IMR-90 (cell line): ENCODE measurements at regions of chr5 and their contacts with region 1.

Region 1: GRCh38 chr5:68215208-68215897 is at the start of gene PIK3R1:
- DNase-seq: peak; percentile 91
- ATAC-seq: peak; percentile 93
- H3K4me3 ChIP-seq: peak within 1 kb of the TSS; percentile 83
- H3K27ac ChIP-seq: peak within 1 kb of the TSS; percentile 88
- H3K4me1 ChIP-seq: peaks cover 2% of the 10 kb centered on the region; the same call in 1 of the 2 replicates
- H3K27me3 ChIP-seq: no peaks in the 10 kb centered on the region
- CTCF ChIP-seq: peak; percentile 35; the same call in 1 of the 2 replicates
- POLR2A ChIP-seq: peak; percentile 92
- RAD21 ChIP-seq: no peak
- total RNA-seq, gene PIK3R1: 9.3 and 13.6 TPM in 2 replicates

Region 2: GRCh38 chr5:67971223-67971830 is 244.0 kb before region 1 on chr5:
- CTCF ChIA-PET with region 1: no interaction called
- POLR2A ChIA-PET with region 1: interaction called, 4 read pairs
- dilution Hi-C with region 1: no loop called
- in situ Hi-C with region 1: no loop called
- intact Hi-C with region 1: loop called (anchors 10 kb)
- DNase-seq: peak; percentile 25
- ATAC-seq: no peak
- H3K4me3 ChIP-seq: no peak overlapping the region
- H3K27ac ChIP-seq: no peak overlapping the region
- H3K4me1 ChIP-seq: no peaks in the 10 kb centered on the region
- H3K27me3 ChIP-seq: no peaks in the 10 kb centered on the region
- CTCF ChIP-seq: no peak
- POLR2A ChIP-seq: no peak
- RAD21 ChIP-seq: no peak

Region 3: GRCh38 chr5:68027519-68027918 is 187.8 kb before region 1 on chr5:
- CTCF ChIA-PET with region 1: no interaction called
- POLR2A ChIA-PET with region 1: no interaction called
- dilution Hi-C with region 1: no loop called
- in situ Hi-C with region 1: no loop called
- intact Hi-C with region 1: loop called (anchors 2 kb)
- DNase-seq: peak; percentile 77
- ATAC-seq: peak; percentile 91
- H3K4me3 ChIP-seq: no peak overlapping the region
- H3K27ac ChIP-seq: no peak overlapping the region
- H3K4me1 ChIP-seq: peaks cover 4% of the 10 kb centered on the region; the same call in 1 of the 2 replicates
- H3K27me3 ChIP-seq: no peaks in the 10 kb centered on the region
- CTCF ChIP-seq: no peak
- POLR2A ChIP-seq: no peak
- RAD21 ChIP-seq: no peak

Region 4: DNA sequence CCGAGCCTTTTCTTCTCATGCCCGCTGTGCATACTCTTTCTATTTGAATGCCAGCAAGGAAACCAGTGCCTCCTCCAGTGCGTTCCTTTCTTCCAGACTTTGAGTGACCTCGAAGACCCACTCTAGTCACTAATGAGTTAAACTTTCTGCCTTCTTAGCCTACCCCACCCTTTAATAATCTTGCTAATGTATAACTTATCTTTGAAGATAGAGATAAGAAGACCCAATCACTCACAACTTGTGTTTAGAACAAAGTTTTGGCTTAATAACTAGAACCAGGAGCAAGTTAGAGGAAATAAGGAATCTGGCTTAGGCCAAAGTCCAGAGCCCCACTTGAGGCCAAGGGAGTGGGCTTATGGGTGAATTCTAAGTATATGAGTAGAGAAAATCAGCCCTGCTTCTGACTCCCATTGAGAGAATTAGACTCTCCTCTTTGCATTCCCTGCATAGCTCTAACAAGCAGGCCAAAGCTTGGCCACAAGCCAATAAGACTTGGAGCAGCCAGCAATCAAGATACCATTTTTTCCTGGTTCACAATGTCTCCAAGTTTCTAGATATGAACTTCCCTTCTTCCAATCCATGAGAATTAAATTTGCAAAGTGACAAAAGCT is 181.3 kb before region 1 on chr5:
- CTCF ChIA-PET with region 1: no interaction called
- POLR2A ChIA-PET with region 1: no interaction called
- dilution Hi-C with region 1: no loop called
- in situ Hi-C with region 1: no loop called
- intact Hi-C with region 1: loop called (anchors 2 kb)
- DNase-seq: peak; percentile 54
- ATAC-seq: peak; percentile 73
- H3K4me3 ChIP-seq: no peak overlapping the region
- H3K27ac ChIP-seq: no peak overlapping the region
- H3K4me1 ChIP-seq: peaks cover 6% of the 10 kb centered on the region; the same call in 1 of the 2 replicates
- H3K27me3 ChIP-seq: no peaks in the 10 kb centered on the region
- CTCF ChIP-seq: no peak
- POLR2A ChIP-seq: no peak
- RAD21 ChIP-seq: no peak

Region 5: GRCh38 chr5:68046445-68046844 is 168.9 kb before region 1 on chr5:
- CTCF ChIA-PET with region 1: no interaction called
- POLR2A ChIA-PET with region 1: no interaction called
- dilution Hi-C with region 1: no loop called
- in situ Hi-C with region 1: no loop called
- intact Hi-C with region 1: loop called (anchors 5 kb)
- DNase-seq: peak; percentile 98
- ATAC-seq: peak; percentile 94
- H3K4me3 ChIP-seq: no peak overlapping the region
- H3K27ac ChIP-seq: peak overlapping the region; percentile 55; the same call in 1 of the 2 replicates
- H3K4me1 ChIP-seq: no peaks in the 10 kb centered on the region
- H3K27me3 ChIP-seq: no peaks in the 10 kb centered on the region
- CTCF ChIP-seq: no peak
- POLR2A ChIP-seq: no peak
- RAD21 ChIP-seq: no peak

Region 6: GRCh38 chr5:68074053-68074632 is 141.2 kb before region 1 on chr5:
- CTCF ChIA-PET with region 1: no interaction called
- POLR2A ChIA-PET with region 1: interaction called, 20 read pairs
- dilution Hi-C with region 1: no loop called
- in situ Hi-C with region 1: no loop called
- intact Hi-C with region 1: no loop called
- DNase-seq: no peak
- ATAC-seq: no peak
- H3K4me3 ChIP-seq: no peak overlapping the region
- H3K27ac ChIP-seq: no peak overlapping the region
- H3K4me1 ChIP-seq: no peaks in the 10 kb centered on the region
- H3K27me3 ChIP-seq: no peaks in the 10 kb centered on the region; the same call in 1 of the 2 replicates
- CTCF ChIP-seq: no peak
- POLR2A ChIP-seq: no peak
- RAD21 ChIP-seq: no peak

Region 7: GRCh38 chr5:68141494-68141893 is 73.9 kb before region 1 on chr5:
- CTCF ChIA-PET with region 1: no interaction called
- POLR2A ChIA-PET with region 1: no interaction called
- dilution Hi-C with region 1: no loop called
- in situ Hi-C with region 1: no loop called
- intact Hi-C with region 1: no loop called
- DNase-seq: peak; percentile 83
- ATAC-seq: peak; percentile 88
- H3K4me3 ChIP-seq: no peak overlapping the region
- H3K27ac ChIP-seq: no peak overlapping the region
- H3K4me1 ChIP-seq: peaks cover 3% of the 10 kb centered on the region; the same call in 1 of the 2 replicates
- H3K27me3 ChIP-seq: no peaks in the 10 kb centered on the region
- CTCF ChIP-seq: no peak
- POLR2A ChIP-seq: no peak
- RAD21 ChIP-seq: no peak

Region 8: GRCh38 chr5:68264024-68264956 is 48.9 kb after region 1 on chr5:
- CTCF ChIA-PET with region 1: no interaction called
- POLR2A ChIA-PET with region 1: no interaction called
- dilution Hi-C with region 1: no loop called
- in situ Hi-C with region 1: no loop called
- intact Hi-C with region 1: no loop called
- DNase-seq: peak; percentile 81
- ATAC-seq: peak; percentile 62
- H3K4me3 ChIP-seq: no peak overlapping the region
- H3K27ac ChIP-seq: peak overlapping the region; percentile 60; the same call in 1 of the 2 replicates
- H3K4me1 ChIP-seq: peaks cover 19% of the 10 kb centered on the region
- H3K27me3 ChIP-seq: no peaks in the 10 kb centered on the region
- CTCF ChIP-seq: no peak
- POLR2A ChIP-seq: no peak
- RAD21 ChIP-seq: no peak